Activated CD4-positive, alpha-beta T cell treated with anti-CD3 and anti-CD28 coated beads for 36 hours (primary cell): ENCODE measurements at regions of chr9 and their contacts with region 1.

Region 1: GRCh38 chr9:70352802-70353201 is 61.7 kb downstream of the KLF9 start:
- DNase-seq: no peak
- ATAC-seq: no peak
- H3K4me3 Mint-ChIP-seq: no peak overlapping the region
- H3K27ac Mint-ChIP-seq: no peak overlapping the region
- H3K4me1 Mint-ChIP-seq: no peaks in the 10 kb centered on the region
- H3K27me3 Mint-ChIP-seq: no peaks in the 10 kb centered on the region

Region 2: DNA sequence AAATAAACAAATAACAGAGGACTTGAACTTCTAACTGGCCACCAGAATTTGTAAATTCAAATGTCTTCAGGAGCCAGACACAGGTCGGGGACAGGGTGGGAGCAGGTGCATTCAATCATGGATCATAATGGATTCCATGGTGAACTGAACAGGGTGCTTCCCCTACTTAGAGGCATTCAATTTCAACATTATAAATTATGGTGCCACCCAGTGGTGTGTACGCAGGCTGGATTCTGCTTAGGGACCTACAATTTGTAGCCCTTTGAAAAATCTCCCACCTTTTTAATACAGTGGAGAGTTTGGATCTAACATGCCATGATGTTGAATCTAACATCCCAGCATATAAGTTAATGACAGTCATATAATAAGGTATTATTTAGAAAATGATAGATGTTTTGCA is 39.4 kb after region 1 on chr9:
- CTCF ChIA-PET with region 1: interaction called, 5 read pairs
- POLR2A ChIA-PET with region 1: no interaction called
- intact Hi-C with region 1: loop called in 1 of 2 experiments (anchors 2 kb)
- DNase-seq: peak; percentile 22
- ATAC-seq: no peak
- H3K4me3 Mint-ChIP-seq: no peak overlapping the region
- H3K27ac Mint-ChIP-seq: no peak overlapping the region
- H3K4me1 Mint-ChIP-seq: peaks cover 80% of the 10 kb centered on the region
- H3K27me3 Mint-ChIP-seq: no peaks in the 10 kb centered on the region

Region 3: GRCh38 chr9:70484210-70485130 is 131.7 kb after region 1 on chr9:
- CTCF ChIA-PET with region 1: no interaction called
- POLR2A ChIA-PET with region 1: no interaction called
- intact Hi-C with region 1: loop called in 1 of 2 experiments (anchors 5 kb)
- DNase-seq: no peak
- ATAC-seq: peak; percentile 63
- H3K4me3 Mint-ChIP-seq: no peak overlapping the region
- H3K27ac Mint-ChIP-seq: no peak overlapping the region
- H3K4me1 Mint-ChIP-seq: peaks cover 9% of the 10 kb centered on the region
- H3K27me3 Mint-ChIP-seq: no peaks in the 10 kb centered on the region